ENCODE measurements at regions of chr14 and their contacts with region 1.

Region 1: DNA sequence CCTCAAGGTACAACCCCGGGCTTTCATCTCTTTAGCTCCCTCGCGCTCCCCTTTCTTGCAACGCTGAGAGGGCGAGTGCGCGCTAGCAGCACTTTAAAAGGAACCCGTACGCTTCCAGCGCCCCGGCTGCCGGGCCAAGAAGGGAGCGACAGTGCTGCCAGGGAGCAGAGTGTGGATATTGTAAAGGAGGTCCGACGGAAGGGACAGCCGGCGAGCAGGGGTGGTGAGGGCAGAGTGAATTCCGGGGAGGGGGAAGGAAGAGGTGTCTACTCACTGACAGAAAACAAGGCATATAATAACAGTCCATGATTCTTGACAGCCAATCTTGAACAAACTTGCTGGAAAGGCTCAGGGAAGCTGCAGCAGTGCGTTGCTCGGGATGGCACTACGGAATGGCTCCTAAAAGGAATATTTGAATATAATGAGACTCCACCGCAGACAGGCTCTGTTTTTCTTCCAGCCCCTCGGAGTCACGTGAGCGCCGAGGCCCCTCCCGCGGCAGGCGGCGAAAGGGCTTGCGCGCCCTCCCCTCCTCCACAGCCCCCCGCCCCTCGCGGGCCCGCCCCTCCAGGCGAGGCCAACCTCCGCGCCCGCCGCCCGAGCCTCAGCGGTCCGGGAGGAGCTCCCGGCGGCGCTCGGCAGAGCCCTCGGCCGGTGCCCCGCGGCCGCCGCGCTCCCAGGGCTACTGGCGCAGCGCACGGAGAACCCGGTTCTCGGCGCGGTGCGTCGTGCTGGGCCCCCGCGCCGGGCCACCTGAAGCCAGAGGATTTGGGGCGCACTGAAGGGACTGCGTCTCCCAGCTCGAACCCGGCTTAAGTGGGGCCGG is 3.4 kb downstream of the BMP4 start:
- DNase-seq: peak; percentile 92
- ATAC-seq: peak; percentile 92

Region 2: GRCh38 chr14:53539489-53540126 is 413.6 kb before region 1 on chr14:
- intact Hi-C with region 1: loop called (anchors 1 kb)
- DNase-seq: no peak
- ATAC-seq: peak; percentile 85

Region 3: DNA sequence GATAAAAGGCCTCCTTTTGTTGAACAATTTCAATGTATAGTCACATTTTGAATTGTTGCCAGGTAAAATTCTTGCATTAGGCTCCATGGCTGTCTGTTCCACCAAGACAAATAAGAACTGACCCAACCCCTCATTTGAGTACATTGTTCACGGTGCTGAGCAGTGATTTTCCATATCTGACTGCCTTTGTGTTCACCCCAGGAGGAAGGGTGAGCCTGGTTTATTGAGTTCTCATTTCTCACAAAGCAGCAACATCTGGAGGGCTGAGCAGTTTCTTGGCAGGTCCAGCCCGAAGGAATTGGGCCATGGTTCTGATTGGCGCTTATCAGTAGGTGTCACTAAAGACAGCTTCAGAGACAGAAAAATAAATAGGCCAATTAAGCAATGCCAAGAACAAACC is 145.7 kb before region 1 on chr14:
- intact Hi-C with region 1: loop called (anchors 1 kb)
- DNase-seq: peak; percentile 62
- ATAC-seq: peak; percentile 95

Region 4: GRCh38 chr14:53894456-53894855 is 58.8 kb before region 1 on chr14:
- intact Hi-C with region 1: loop called (anchors 5 kb)
- DNase-seq: no peak
- ATAC-seq: no peak

Region 5: GRCh38 chr14:54347997-54348611 is 394.9 kb after region 1 on chr14:
- intact Hi-C with region 1: loop called (anchors 5 kb)
- DNase-seq: no peak
- ATAC-seq: peak; percentile 48